Activated naive CD4-positive, alpha-beta T cell treated with anti-CD3 and anti-CD28 coated beads for 36 hours (primary cell): ENCODE measurements at regions of chr1 and their contacts with region 1.

Region 1: DNA sequence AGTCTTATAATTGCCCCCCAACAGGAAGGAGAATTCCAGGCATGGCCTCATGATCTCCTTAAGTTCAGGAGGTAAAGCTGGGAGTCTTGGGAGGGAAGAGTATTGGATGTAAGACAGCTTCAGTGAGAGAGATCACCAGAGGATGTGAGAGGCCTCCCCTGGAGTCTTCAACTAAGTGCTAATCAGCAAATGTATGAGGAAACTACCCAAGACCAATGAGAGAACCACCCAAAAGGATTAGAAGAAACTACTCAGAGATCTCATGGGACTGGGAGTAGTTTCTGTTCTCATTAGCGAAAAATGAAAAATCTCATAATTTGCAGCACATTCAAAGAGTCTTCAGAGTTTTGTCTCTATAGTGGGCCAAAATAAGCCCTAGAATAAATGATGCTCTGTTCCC is 36.6 kb upstream of the WNT2B start:
- DNase-seq: no peak
- H3K4me3 Mint-ChIP-seq: no peak overlapping the region
- H3K27ac Mint-ChIP-seq: no peak overlapping the region
- H3K4me1 Mint-ChIP-seq: no peaks in the 10 kb centered on the region
- H3K27me3 Mint-ChIP-seq: peaks cover 23% of the 10 kb centered on the region

Region 2: DNA sequence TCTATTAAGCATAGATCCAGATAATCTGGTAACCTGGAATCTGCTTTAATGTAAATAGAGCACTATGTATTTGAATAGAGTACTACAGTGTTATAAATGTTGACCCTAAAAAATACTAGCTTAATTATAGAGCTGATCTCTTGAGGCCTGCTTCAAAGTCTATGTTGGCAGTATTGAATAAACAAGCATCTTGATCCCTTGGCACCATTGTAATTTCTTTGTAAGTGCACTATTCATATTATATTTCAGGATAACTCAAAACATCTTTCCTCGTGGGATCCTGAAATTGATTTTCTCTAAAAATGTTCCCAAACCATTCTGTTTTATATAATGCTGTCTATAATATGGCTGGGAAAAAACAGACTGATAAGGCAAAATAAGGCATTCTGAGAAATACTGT is 65.4 kb before region 1 on chr1:
- CTCF ChIA-PET with region 1: no interaction called
- intact Hi-C with region 1: no loop called
- DNase-seq: no peak
- H3K4me3 Mint-ChIP-seq: no peak overlapping the region
- H3K27ac Mint-ChIP-seq: no peak overlapping the region
- H3K4me1 Mint-ChIP-seq: peaks cover 4% of the 10 kb centered on the region
- H3K27me3 Mint-ChIP-seq: no peaks in the 10 kb centered on the region

Region 3: DNA sequence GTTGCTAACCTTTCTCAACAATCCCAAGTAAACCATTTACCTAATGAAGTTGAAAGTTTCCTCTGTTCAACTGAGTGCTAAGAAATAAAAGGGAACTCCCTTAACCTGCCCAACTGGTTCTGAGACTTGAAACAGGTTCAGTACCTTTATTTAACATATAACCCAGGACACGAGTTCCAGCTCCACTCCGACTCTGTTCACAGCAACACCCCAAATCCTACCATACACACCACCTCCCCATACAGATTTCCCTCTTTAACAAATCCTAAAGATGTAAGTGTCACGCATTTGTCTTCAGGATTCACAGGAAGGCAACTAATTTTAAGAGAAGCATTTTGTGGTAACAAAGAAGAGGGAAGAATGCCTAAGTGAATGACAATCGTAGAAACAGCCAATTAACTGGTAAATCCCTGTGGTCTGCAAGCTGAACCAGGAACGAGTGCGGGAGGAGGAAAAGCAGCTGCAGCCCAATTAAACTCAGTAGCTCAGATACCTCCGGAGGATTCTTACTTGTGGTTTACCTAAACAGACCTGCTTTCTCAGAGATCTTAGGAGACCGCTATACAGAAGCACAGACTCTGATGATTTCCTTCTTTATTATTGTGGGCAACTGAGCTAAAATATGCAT is 783.7 kb after region 1 on chr1:
- CTCF ChIA-PET with region 1: no interaction called
- intact Hi-C with region 1: loop called (anchors 10 kb)
- DNase-seq: no peak
- H3K4me3 Mint-ChIP-seq: no peak overlapping the region
- H3K27ac Mint-ChIP-seq: no peak overlapping the region
- H3K4me1 Mint-ChIP-seq: no peaks in the 10 kb centered on the region
- H3K27me3 Mint-ChIP-seq: peaks cover 10% of the 10 kb centered on the region